Thyroid gland (tissue), 4 donors: ENCODE measurements at regions of chr15 and their contacts with region 1.

Region 1: DNA sequence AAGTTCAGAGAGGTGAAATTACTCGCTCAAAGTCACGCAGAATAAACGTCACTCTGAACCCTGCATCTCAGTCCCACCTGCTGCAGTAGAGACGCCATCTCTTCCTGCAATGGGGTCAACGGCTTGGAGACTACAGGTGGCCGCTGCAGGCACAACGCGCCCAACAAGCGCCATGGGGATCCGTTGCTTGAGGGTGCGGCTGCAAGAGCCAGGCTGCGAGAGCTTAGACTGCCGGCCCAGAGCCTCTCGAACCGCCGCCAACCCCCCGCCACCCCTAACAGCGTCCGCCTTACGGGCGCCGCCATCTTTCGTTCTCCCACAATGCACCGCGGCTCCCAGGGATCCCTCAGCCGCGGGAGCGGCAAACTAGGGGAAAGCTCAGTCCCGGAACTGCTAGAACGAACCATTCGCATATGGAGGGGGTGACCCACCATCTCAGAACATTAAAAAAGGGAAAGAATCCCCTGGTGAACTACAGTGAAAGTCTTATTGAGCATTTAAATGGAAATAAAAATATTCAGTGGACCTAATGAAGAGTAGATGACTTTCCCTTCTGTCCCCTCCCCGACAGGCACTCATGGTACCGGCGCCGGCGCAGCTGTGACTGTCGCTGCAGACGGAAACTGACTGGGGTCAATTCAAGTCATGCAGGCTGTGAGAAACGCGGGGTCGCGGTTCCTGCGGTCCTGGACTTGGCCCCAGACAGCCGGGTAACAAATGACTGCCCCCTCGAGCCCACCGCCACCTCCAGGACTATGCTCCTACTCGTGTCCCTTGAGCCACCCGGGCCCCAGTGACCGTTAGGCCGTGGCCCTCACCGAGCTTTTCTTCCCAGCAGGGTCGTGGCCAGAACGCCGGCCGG is at the starts of genes MRPL46 and MRPS11:
- DNase-seq: peak; percentile 87 to 89
- H3K4me3 ChIP-seq: peak within 1 kb of the TSS; percentile 44 to 83 (median 66)
- H3K27ac ChIP-seq: peak within 1 kb of the TSS; percentile 90 to 98 (median 91)
- H3K4me1 ChIP-seq: peaks cover 19 to 37% of the 10 kb centered on the region in 2 donors
- H3K27me3 ChIP-seq: no peaks in the 10 kb centered on the region
- CTCF ChIP-seq: no peak
- POLR2A ChIP-seq: peak in 1 of 2 donors; percentile 33
- total RNA-seq, gene MRPL46: 17.3 to 30.5 (median 26.0) TPM
- total RNA-seq, gene MRPS11: 44.2 to 95.3 (median 65.0) TPM

Region 2: GRCh38 chr15:88615303-88616107 is 148.2 kb after region 1 on chr15:
- intact Hi-C with region 1: loop called (anchors 5 kb)
- DNase-seq: no peak
- H3K4me3 ChIP-seq: no peak overlapping the region
- H3K27ac ChIP-seq: no peak overlapping the region
- H3K4me1 ChIP-seq: no peaks in the 10 kb centered on the region
- H3K27me3 ChIP-seq: no peaks in the 10 kb centered on the region
- CTCF ChIP-seq: no peak
- POLR2A ChIP-seq: no peak